ENCODE measurements at regions of chr17 and their contacts with region 1.

Region 1: DNA sequence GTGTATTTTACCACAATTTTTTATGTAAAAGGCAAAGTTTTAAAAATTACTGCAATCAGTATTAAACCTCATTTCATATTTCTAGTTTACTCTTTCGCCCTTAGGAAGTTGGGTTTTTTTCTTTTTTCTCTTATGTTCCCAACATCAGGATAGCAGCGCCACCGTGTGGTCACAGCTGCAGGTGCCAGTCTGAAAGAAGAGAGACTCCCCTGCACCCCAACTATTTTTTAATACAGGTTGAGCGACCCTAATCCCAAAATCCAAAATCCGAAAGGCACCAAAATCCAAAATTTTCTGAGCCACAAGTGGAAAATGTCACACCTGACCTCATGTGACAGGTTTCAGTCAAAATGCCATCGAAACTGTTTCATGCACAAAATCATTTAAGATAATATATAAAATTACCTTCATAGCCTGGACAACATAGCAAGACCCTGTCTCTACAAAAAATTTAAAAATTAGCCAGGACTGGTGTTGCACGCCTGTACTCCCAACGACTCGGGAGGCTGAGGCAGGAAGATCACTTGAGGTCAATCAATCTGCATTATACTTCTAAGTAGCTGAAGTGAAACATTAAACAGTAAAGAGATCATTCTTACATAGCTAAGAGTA is 21.8 kb upstream of the ASGR2 start:
- DNase-seq: peak; percentile 86 to 90
- H3K4me3 ChIP-seq: no peak overlapping the region
- H3K27ac ChIP-seq: no peak overlapping the region
- H3K4me1 ChIP-seq: peaks cover 0 to 23% (median 10%) of the 10 kb centered on the region in 4 donors
- H3K27me3 ChIP-seq: peaks cover 0 to 91% (median 14%) of the 10 kb centered on the region in 3 donors
- CTCF ChIP-seq: peak in 6 of 7 experiments; percentile 52 to 92 (median 86)
- EP300 ChIP-seq: no peak
- POLR2A ChIP-seq: no peak

Region 2: GRCh38 chr17:7056386-7056785 is 80.0 kb before region 1 on chr17:
- intact Hi-C with region 1: loop called (anchors 2 kb)
- DNase-seq: no peak
- H3K4me3 ChIP-seq: no peak overlapping the region
- H3K27ac ChIP-seq: no peak overlapping the region
- H3K4me1 ChIP-seq: peaks cover 0 to 15% (median 3%) of the 10 kb centered on the region in 4 donors
- H3K27me3 ChIP-seq: peaks cover 0 to 11% (median 0%) of the 10 kb centered on the region in 3 donors
- CTCF ChIP-seq: no peak
- EP300 ChIP-seq: no peak
- POLR2A ChIP-seq: no peak

Measured in stomach (tissue), 19 donors.